HAP-1 (cell line): ENCODE measurements at regions of chr11 and their contacts with region 1.

Region 1: GRCh38 chr11:17391493-17392355 is 3.3 kb upstream of the KCNJ11 start:
- DNase-seq: peak in 1 of 2 experiments; percentile 27
- H3K4me3 ChIP-seq: no peak overlapping the region
- H3K4me1 ChIP-seq: peaks cover 6% of the 10 kb centered on the region
- H3K27me3 ChIP-seq: no peaks in the 10 kb centered on the region

Region 2: GRCh38 chr11:16986434-16987215 is 405.1 kb before region 1 on chr11:
- in situ Hi-C with region 1: no loop called
- DNase-seq: no peak
- H3K4me3 ChIP-seq: no peak overlapping the region
- H3K4me1 ChIP-seq: peaks cover 14% of the 10 kb centered on the region
- H3K27me3 ChIP-seq: no peaks in the 10 kb centered on the region

Region 3: DNA sequence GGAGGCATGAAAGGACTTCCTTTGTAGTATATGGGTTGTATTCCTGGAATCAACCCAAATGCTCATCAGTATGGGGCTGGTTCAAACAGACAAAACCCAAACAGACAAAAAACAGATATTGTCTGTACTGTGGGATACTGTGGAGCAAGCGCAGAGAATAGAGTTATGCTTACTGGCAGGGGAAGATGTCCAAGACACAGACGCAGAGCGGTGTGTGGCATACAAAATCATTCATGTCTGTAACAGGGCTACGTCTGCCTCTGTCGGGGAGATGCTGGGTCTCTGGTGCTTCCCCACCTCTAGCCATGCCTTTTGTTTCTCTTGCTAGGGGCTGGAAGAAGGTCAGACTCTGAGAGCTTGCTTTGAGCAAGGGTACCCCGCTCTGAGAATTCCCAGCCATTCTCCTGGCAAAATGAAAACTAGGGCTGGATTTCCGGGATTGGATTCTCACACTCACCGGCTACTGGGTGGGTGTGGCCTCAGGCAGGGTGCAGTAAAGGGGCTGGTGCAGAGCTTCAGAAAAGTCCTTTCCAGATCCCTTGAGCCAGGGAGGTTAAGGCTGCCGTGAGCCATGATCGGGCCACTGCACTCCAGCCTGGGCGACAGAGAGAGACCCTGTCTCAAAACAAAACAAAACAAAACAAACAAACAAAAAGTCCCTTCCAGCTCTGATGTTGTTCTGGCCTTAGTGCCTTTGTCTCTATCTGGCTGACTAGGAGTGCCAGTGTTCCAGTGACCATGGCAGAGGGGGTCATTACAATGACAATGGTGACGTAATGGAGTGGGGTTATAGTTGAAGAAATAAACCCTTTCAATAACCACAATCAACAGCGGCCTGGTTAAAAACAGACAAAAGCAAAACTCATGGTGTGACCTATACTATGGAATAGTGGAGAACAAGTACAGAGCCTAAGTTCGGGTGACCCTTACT is 87.8 kb after region 1 on chr11:
- in situ Hi-C with region 1: loop called (anchors 5 kb)
- DNase-seq: peak; percentile 60 to 89
- H3K4me3 ChIP-seq: no peak overlapping the region
- H3K4me1 ChIP-seq: peaks cover 8% of the 10 kb centered on the region
- H3K27me3 ChIP-seq: peaks cover 17% of the 10 kb centered on the region; the same call in 1 of the 2 replicates